HEK293T (cell line): ENCODE measurements at regions of chr1 and their contacts with region 1.

Region 1: DNA sequence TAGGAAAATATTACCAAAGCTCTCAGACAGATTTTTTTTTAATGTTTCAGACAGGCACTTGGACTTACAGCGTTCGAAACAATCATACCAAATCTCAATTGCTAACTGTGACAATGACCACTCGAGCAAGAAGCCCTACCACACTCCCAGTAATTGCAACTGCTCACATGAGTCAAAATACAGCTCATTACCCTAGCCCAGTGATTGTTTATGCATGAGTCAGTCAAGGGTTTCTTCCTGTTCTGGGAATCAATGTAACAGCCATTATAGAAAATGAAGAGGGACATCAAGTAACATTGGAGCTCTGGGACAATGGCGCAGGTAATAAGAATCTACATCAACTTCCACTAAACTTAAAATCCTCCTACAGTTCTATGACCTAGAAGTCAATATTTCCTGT is 56.1 kb upstream of the SH3GLB1 start:
- DNase-seq: peak; percentile 7

Region 2: GRCh38 chr1:85962457-85962856 is 685.8 kb before region 1 on chr1:
- CTCF ChIA-PET with region 1: interaction called, 10 read pairs
- POLR2A ChIA-PET with region 1: no interaction called
- DNase-seq: no peak

Region 3: GRCh38 chr1:86356247-86356646 is 292.0 kb before region 1 on chr1:
- CTCF ChIA-PET with region 1: no interaction called
- POLR2A ChIA-PET with region 1: no interaction called
- DNase-seq: no peak